MCF 10A (cell line): ENCODE measurements at regions of chr19 and their contacts with region 1.

Region 1: GRCh38 chr19:15418588-15419412 is at the start of gene AKAP8L:
- DNase-seq: peak; percentile 100
- H3K4me3 Mint-ChIP-seq: peak within 1 kb of the TSS; percentile 95
- H3K27ac Mint-ChIP-seq: peak within 1 kb of the TSS; percentile 97
- H3K4me1 Mint-ChIP-seq: peaks cover 19% of the 10 kb centered on the region
- H3K27me3 Mint-ChIP-seq: no peaks in the 10 kb centered on the region
- CTCF ChIP-seq: peak; percentile 43
- total RNA-seq, gene AKAP8L: 84.7 and 89.0 TPM in 2 replicates

Region 2: GRCh38 chr19:15177269-15178116 is 241.3 kb before region 1 on chr19:
- CTCF ChIA-PET with region 1: interaction called, 7 read pairs
- POLR2A ChIA-PET with region 1: no interaction called
- intact Hi-C with region 1: loop called (anchors 5 kb)
- DNase-seq: peak; percentile 76
- H3K4me3 Mint-ChIP-seq: peak overlapping the region; percentile 25
- H3K27ac Mint-ChIP-seq: no peak overlapping the region
- H3K4me1 Mint-ChIP-seq: peaks cover 7% of the 10 kb centered on the region
- H3K27me3 Mint-ChIP-seq: no peaks in the 10 kb centered on the region
- CTCF ChIP-seq: peak; percentile 92

Region 3: GRCh38 chr19:15393963-15394362 is 24.8 kb before region 1 on chr19:
- CTCF ChIA-PET with region 1: interaction called, 9 read pairs
- POLR2A ChIA-PET with region 1: interaction called, 10 read pairs
- intact Hi-C with region 1: no loop called
- DNase-seq: peak; percentile 41
- H3K4me3 Mint-ChIP-seq: no peak overlapping the region
- H3K27ac Mint-ChIP-seq: no peak overlapping the region
- H3K4me1 Mint-ChIP-seq: peaks cover 5% of the 10 kb centered on the region
- H3K27me3 Mint-ChIP-seq: no peaks in the 10 kb centered on the region
- CTCF ChIP-seq: no peak

Region 4: GRCh38 chr19:15404780-15405211 is 14.0 kb before region 1 on chr19:
- CTCF ChIA-PET with region 1: interaction called, 5 read pairs
- POLR2A ChIA-PET with region 1: interaction called, 14 read pairs
- intact Hi-C with region 1: no loop called
- DNase-seq: no peak
- H3K4me3 Mint-ChIP-seq: no peak overlapping the region
- H3K27ac Mint-ChIP-seq: no peak overlapping the region
- H3K4me1 Mint-ChIP-seq: peaks cover 15% of the 10 kb centered on the region
- H3K27me3 Mint-ChIP-seq: no peaks in the 10 kb centered on the region
- CTCF ChIP-seq: no peak

Region 5: GRCh38 chr19:15432629-15433518 is 14.1 kb after region 1 on chr19:
- CTCF ChIA-PET with region 1: interaction called, 13 read pairs
- POLR2A ChIA-PET with region 1: interaction called, 80 read pairs
- intact Hi-C with region 1: no loop called
- DNase-seq: peak; percentile 85
- H3K4me3 Mint-ChIP-seq: peak overlapping the region; percentile 95
- H3K27ac Mint-ChIP-seq: peak overlapping the region; percentile 81
- H3K4me1 Mint-ChIP-seq: peaks cover 20% of the 10 kb centered on the region
- H3K27me3 Mint-ChIP-seq: no peaks in the 10 kb centered on the region
- CTCF ChIP-seq: no peak

Region 6: DNA sequence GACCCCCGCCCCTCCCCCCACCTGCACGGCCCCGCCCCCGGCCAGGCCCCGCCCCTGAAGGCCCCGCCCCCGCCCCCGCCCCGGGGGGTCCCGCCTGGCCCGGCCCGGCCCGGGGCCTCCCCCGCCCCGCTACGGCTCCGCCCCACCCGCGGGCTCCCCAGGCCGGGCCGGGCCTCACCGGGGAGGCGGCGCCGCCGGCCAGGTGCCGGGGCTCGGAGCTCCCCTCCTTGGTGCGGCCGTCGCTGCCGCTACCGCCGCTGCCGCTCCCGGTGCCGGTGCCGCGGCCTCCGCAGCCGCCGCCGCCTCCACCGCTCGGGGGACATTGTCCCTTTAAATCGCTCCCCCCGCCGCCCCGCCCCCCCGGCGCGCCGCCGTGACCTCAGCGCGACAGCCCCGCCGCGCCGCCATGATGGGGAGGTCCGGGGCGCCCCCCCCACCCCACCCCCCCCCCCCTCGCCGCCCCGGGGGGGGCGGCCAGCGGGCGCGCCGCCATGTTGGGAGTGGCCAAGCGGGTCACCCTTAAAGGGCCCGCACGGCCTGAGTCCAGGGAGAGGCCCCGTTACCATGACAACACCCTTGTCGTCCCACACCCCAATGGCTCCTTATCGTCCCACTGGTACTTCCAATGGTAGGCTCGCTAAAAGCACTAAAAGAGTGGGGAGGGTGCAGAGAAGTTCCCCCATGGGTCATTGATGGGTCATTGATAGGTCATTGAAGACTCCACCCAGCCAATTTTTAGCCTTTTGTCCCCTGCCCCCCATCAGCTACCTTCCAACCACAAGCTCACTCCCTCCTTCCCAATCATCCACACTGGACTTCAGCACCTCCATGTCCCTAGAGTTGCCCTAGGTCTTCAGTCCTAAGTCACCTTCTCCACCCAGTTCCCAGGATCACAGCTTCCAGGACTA is 31.1 kb after region 1 on chr19 and contains the start of gene WIZ:
- CTCF ChIA-PET with region 1: no interaction called
- POLR2A ChIA-PET with region 1: no interaction called
- intact Hi-C with region 1: no loop called
- DNase-seq: peak; percentile 75
- H3K4me3 Mint-ChIP-seq: peak within 1 kb of the TSS; percentile 61
- H3K27ac Mint-ChIP-seq: peak within 1 kb of the TSS; percentile 65
- H3K4me1 Mint-ChIP-seq: peaks cover 18% of the 10 kb centered on the region
- H3K27me3 Mint-ChIP-seq: no peaks in the 10 kb centered on the region
- CTCF ChIP-seq: no peak
- total RNA-seq, gene WIZ: 46.4 and 46.5 TPM in 2 replicates

Region 7: GRCh38 chr19:15555759-15556633 is 137.2 kb after region 1 on chr19:
- CTCF ChIA-PET with region 1: interaction called, 30 read pairs
- POLR2A ChIA-PET with region 1: interaction called, 3 read pairs
- intact Hi-C with region 1: loop called (anchors 1 kb)
- DNase-seq: peak; percentile 90
- H3K4me3 Mint-ChIP-seq: peak overlapping the region; percentile 60
- H3K27ac Mint-ChIP-seq: no peak overlapping the region
- H3K4me1 Mint-ChIP-seq: peaks cover 11% of the 10 kb centered on the region
- H3K27me3 Mint-ChIP-seq: no peaks in the 10 kb centered on the region
- CTCF ChIP-seq: peak; percentile 81

Region 8: DNA sequence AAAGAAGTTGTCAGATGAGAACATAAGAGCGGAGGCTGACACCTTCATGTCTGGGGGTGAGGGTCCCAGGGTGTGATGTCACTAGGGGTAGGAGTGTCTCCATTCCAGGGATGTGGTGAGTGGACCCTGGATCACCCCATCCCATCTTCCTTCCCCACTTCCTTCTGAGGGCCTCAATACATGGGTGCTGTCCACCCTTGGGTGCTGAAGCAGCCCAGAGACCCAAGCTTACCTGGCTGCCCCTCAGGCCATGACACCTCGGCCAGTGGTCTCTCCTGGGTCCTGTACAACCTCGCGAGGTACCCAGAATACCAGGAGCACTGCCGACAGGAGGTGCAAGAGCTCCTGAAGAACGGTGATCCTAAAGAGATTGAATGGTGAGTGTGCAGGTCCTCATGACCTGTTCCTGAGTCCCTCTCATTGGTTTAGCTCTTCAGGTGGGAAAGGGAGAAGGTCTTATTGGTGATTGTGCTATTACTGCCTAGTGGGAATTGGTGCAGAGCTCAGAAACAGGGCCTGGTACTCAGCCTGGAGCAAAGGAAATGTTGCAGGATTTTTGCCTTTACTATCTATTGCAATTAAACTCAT is 158.5 kb after region 1 on chr19:
- CTCF ChIA-PET with region 1: no interaction called
- POLR2A ChIA-PET with region 1: no interaction called
- intact Hi-C with region 1: no loop called
- DNase-seq: no peak
- H3K4me3 Mint-ChIP-seq: no peak overlapping the region
- H3K27ac Mint-ChIP-seq: no peak overlapping the region
- H3K4me1 Mint-ChIP-seq: no peaks in the 10 kb centered on the region
- H3K27me3 Mint-ChIP-seq: peaks cover 14% of the 10 kb centered on the region
- CTCF ChIP-seq: no peak

Region 9: GRCh38 chr19:15614507-15615379 is 195.9 kb after region 1 on chr19 and contains the start of gene CYP4F8:
- CTCF ChIA-PET with region 1: no interaction called
- POLR2A ChIA-PET with region 1: no interaction called
- intact Hi-C with region 1: no loop called
- DNase-seq: no peak
- H3K4me3 Mint-ChIP-seq: no peak within 1 kb of the TSS
- H3K27ac Mint-ChIP-seq: no peak within 1 kb of the TSS
- H3K4me1 Mint-ChIP-seq: no peaks in the 10 kb centered on the region
- H3K27me3 Mint-ChIP-seq: peaks cover 12% of the 10 kb centered on the region
- CTCF ChIP-seq: no peak
- total RNA-seq, gene CYP4F8: not detected in 2 replicates